Stomach (tissue), 19 donors: ENCODE measurements at regions of chr15 and their contacts with region 1.

Region 1: GRCh38 chr15:77944002-77944867 is 133.3 kb downstream of the TBC1D2B start:
- DNase-seq: peak; percentile 80 to 91
- H3K4me3 ChIP-seq: peak overlapping the region; percentile 39 to 58 (median 54)
- H3K27ac ChIP-seq: peak overlapping the region; percentile 28 to 86 (median 79)
- H3K4me1 ChIP-seq: peaks cover 0 to 11% (median 8%) of the 10 kb centered on the region in 4 donors
- H3K27me3 ChIP-seq: no peaks in the 10 kb centered on the region
- CTCF ChIP-seq: no peak
- EP300 ChIP-seq: no peak
- POLR2A ChIP-seq: no peak

Region 2: DNA sequence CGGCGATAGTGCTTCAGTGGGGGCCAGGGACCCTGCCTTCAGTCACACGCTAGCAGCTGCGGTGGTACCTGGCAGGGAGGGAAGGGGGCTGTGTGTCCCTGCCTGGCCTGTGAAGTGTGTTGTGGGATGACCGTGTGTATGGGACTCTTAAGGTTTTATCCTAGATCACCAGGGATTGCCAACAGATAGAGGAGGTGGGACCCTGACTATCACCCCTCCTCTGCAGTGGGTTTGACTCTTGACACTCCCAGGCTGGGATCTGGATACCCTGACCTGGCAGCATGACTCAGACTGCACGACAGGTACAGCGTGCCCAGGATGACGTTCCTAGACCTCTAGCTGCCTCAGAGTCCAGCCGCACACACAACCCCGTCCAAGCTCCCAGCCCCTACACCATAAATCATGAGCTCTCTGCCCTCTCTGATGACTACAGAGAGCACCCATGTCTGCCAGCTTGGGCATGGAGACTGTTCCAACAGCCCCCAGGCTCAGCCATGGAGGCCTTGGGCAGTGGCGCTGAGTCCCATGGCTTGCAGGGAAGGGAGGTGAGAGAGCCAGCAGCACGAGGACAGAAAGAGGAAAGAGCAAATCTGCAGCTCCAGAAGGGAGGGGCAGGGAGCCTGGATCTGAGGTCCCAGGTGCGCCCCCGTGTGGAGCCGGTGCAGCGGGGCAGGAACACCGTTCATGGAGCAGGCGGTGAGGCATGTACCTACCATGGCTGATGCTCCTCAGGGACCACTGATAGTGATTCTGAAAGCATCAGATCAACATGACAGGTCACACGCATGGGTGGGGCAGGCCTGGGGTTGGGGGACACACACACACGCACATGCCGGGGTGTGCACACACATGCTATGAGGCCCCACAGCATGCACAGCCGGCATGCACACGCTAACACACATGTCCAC is 796.0 kb after region 1 on chr15:
- intact Hi-C with region 1: loop called (anchors 10 kb)
- DNase-seq: peak; percentile 78 to 81
- H3K4me3 ChIP-seq: no peak overlapping the region
- H3K27ac ChIP-seq: no peak overlapping the region
- H3K4me1 ChIP-seq: peaks cover 0 to 11% (median 0%) of the 10 kb centered on the region in 4 donors
- H3K27me3 ChIP-seq: peaks cover 0 to 9% (median 0%) of the 10 kb centered on the region in 3 donors
- CTCF ChIP-seq: peak in 4 of 7 experiments; percentile 9 to 44 (median 28)
- EP300 ChIP-seq: no peak
- POLR2A ChIP-seq: no peak